Head of caudate nucleus (tissue), 42 donors: ENCODE measurements at regions of chr4 and their contacts with region 1.

Region 1: DNA sequence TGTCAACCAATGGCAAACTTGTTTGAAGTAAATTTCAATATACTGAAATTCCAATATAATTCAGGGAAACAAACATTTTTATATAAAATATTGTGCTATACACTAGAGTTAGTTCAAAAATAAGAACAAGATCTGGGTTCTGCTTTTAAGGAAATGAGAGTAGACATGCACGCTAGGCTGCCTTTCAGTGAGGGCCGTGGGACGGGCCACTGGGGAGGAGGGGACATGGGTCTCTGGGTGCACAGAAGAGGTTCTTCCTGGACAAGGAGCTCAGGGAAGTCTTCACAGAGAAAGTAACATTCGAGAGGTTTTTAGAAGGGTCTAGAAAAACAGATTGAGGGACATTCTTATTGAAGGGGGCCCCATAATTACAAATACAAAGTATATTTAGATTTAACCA is 64.4 kb downstream of the SHROOM3 start:
- DNase-seq: peak in 2 of 42 donors; percentile 17

Region 2: GRCh38 chr4:76434901-76435526 is 64.4 kb before region 1 on chr4 and contains the start of gene SHROOM3:
- intact Hi-C with region 1: loop called (anchors 5 kb)
- DNase-seq: no peak